ENCODE measurements at regions of chr17 and their contacts with region 1.

Region 1: GRCh38 chr17:42760652-42761581 is at the start of gene RAMP2:
- DNase-seq: peak; percentile 38
- H3K4me3 Mint-ChIP-seq: peak within 1 kb of the TSS; percentile 41
- H3K27ac Mint-ChIP-seq: no peak within 1 kb of the TSS
- H3K4me1 Mint-ChIP-seq: peaks cover 12% of the 10 kb centered on the region
- H3K27me3 Mint-ChIP-seq: peaks cover 89% of the 10 kb centered on the region

Region 2: DNA sequence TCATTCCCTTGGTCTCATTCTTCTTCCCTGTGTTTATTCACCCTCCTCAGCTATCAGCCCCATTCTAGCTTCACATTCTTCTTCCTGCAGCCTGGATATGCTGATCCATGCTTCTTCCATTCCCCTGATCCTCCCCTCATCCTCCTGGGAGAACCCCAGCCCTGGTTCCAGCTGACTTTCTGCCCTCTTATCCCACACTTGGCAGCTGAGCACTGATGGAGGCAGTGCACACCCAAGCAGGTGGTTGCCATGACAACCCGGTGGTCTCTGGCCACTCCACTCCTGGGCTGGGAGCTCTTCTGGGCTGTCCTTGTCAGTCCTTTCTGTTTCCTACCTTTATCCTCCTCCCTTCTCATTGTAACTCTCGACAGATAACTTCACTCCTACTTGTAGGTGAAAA is 118.6 kb before region 1 on chr17:
- CTCF ChIA-PET with region 1: no interaction called
- DNase-seq: no peak
- H3K4me3 Mint-ChIP-seq: no peak overlapping the region
- H3K27ac Mint-ChIP-seq: no peak overlapping the region
- H3K4me1 Mint-ChIP-seq: no peaks in the 10 kb centered on the region
- H3K27me3 Mint-ChIP-seq: peaks cover 38% of the 10 kb centered on the region

Region 3: DNA sequence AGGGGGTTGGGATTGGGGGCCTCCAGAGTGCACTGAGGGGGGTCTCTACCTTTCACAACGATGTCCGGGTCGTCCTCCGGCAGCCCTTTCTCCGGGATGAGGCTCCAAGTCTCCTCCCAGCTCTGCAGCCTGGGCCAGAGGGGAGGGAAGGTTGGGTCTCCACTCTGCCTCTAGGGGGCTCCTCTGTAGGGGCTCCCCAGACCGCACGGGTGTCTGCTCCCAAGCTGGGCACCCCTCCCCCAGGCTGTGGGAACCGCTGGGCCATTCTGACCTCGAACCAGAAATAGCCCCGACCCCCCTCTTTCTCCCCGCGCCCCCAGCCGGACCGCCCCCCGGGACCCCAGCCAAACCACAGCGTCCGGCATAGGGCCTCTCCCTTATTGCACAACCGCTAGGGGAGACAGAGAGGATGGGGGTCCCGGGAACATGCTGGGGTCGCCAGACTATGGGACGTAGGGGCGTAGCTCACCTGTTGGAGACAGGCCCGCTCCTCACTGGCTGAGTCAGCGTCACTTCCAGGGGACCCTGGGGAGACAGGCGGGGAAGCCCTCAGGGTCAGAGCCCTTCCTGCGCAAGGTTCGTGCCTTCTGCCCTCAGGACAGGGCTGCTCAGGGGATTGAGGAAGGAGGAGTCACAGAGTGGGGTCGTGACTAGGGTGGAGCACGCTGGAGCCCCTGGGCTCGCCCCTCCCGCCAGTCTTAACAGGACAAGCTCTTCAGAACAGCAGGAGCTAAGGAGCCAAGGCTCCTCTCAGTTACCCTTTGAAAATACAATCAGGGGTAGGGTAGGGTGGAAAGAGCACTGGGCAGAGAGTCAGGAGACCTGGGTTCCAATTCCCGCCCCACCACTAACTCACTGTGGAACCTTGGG is 86.8 kb before region 1 on chr17:
- CTCF ChIA-PET with region 1: no interaction called
- DNase-seq: peak; percentile 41
- H3K4me3 Mint-ChIP-seq: no peak overlapping the region
- H3K27ac Mint-ChIP-seq: no peak overlapping the region
- H3K4me1 Mint-ChIP-seq: peaks cover 52% of the 10 kb centered on the region
- H3K27me3 Mint-ChIP-seq: peaks cover 80% of the 10 kb centered on the region

Region 4: GRCh38 chr17:42720996-42721583 is 39.8 kb before region 1 on chr17:
- CTCF ChIA-PET with region 1: interaction called, 22 read pairs
- DNase-seq: peak; percentile 46
- H3K4me3 Mint-ChIP-seq: no peak overlapping the region
- H3K27ac Mint-ChIP-seq: no peak overlapping the region
- H3K4me1 Mint-ChIP-seq: peaks cover 2% of the 10 kb centered on the region
- H3K27me3 Mint-ChIP-seq: no peaks in the 10 kb centered on the region

Region 5: DNA sequence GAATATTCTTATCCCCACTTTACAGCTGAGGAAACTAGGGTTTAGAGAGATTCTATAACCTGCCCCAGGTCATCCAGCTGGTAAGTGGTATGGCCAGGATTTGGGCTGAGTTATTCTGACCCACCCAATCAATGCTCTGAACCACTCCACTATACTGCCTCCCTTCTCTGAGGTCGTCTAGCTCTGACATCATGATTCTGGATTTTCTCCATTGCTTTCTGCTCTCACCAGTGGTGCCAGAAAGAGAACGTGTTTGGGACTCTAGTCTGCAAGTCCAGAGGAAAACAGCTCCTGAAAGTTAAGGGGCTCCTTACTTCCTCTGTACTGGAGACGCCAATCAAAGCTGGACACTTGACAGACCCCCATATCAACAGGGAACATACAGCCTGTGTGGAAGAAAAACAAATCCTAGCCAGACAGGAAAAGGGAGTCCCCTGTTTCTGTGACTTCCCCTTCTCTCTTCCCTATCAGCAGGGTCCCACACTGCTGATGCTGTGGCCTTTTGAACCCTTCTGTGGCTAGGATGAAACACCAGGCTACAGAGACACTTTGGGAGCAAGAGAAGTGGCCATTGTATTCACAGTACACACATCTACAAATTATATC is 10.1 kb before region 1 on chr17:
- CTCF ChIA-PET with region 1: interaction called, 10 read pairs
- DNase-seq: no peak
- H3K4me3 Mint-ChIP-seq: no peak overlapping the region
- H3K27ac Mint-ChIP-seq: no peak overlapping the region
- H3K4me1 Mint-ChIP-seq: no peaks in the 10 kb centered on the region
- H3K27me3 Mint-ChIP-seq: peaks cover 85% of the 10 kb centered on the region

Region 6: DNA sequence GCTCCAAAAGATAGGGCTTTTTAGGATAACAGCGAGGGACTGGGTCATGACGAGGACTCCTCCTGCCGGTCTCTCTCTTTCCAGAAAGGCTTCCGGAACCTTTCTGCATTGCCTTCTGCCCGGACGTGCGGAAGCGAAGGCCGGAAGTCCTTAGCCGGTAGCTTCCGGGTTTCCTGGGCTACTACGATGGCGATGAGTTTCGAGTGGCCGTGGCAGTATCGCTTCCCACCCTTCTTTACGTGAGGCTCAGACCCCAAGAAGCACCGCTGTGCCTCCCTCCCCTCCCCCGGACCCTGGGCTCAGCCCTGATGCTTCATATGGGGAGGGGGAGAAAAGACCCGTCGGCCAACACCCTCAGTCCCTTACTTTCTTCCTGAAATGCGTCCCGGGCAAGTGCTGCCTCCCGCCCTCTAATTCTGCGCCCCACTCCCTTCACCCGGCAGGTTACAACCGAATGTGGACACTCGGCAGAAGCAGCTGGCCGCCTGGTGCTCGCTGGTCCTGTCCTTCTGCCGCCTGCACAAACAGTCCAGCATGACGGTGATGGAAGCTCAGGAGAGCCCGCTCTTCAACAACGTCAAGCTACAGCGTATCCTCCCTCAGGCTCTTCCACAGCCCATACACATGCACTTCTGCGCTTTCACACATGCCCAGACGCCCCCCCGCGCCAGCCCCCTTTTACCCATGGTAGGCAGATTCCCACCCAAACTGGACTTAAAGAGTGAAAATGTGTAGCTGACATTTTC is 12.5 kb after region 1 on chr17 and contains the start of gene VPS25:
- CTCF ChIA-PET with region 1: interaction called, 18 read pairs
- DNase-seq: peak; percentile 80
- H3K4me3 Mint-ChIP-seq: peak within 1 kb of the TSS; percentile 97
- H3K27ac Mint-ChIP-seq: peak within 1 kb of the TSS; percentile 90
- H3K4me1 Mint-ChIP-seq: peaks cover 37% of the 10 kb centered on the region
- H3K27me3 Mint-ChIP-seq: peaks cover 6% of the 10 kb centered on the region

Measured in activated naive CD4-positive, alpha-beta T cell treated with anti-CD3 and anti-CD28 coated beads, Interleukin-2, amount 10 ng/mL, durations not matched to agents 7 days and 5 days (primary cell).